ENCODE measurements at regions of chr1 and their contacts with region 1.

Region 1: DNA sequence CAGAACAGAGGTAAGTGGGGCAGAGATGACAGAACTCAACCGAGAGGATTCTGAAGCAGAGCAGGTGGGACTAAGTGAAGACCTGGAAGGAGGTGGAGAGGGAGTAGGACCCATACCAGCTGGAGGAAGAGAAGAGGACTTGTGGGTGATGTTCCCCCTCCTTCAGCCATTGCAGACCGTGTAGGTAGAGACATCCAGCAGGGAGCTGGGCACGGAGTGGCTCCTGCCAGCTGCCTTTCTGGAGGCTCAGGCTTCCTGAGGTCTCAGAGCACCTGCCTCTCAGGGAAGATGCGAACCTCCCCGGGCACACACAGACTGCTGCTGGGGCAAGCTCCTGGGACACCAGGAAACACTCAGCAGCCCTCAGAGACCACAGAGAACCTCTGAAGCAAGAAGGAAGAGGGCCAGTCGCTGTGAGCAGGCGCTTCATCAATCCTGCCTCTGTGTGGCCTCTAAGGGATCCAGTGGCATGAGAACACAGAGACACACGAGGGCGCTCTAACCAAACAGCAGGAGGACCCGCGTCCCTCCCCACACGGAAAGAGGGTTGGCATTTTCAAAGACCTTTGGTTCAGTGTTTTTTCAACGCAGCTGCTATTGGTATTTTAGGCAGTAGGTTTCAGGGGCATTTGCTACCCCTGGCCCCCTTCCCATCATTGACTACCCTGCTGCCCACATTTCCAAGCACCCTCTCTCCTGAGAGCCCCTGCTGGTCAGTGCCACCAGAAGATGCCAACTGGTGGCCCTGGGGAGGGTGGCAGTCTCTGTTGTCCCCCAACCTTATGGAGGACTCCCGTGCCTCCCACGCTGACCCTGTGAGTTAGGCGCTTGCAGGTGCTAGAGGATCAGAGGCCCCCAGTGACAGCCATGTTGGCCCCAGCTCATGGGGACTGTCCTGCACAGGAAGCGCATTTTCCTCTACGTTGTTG is 89.6 kb upstream of the EDN2 start:
- DNase-seq: peak; percentile 69 to 84
- ATAC-seq: peak; percentile 87 to 94 (median 92)
- H3K4me3 ChIP-seq: no peak overlapping the region
- H3K27ac ChIP-seq: no peak overlapping the region
- H3K4me1 ChIP-seq: peaks cover 0 to 8% (median 0%) of the 10 kb centered on the region in 9 donors
- H3K27me3 ChIP-seq: no peaks in the 10 kb centered on the region
- CTCF ChIP-seq: peak; percentile 76 to 92 (median 91)

Region 2: GRCh38 chr1:40610156-40610555 is 963.9 kb before region 1 on chr1:
- intact Hi-C with region 1: no loop called
- DNase-seq: no peak
- ATAC-seq: peak in 2 of 8 donors; percentile 34 to 38
- H3K4me3 ChIP-seq: no peak overlapping the region
- H3K27ac ChIP-seq: no peak overlapping the region
- H3K4me1 ChIP-seq: peaks cover 0 to 6% (median 0%) of the 10 kb centered on the region in 9 donors
- H3K27me3 ChIP-seq: peaks cover 0 to 5% (median 0%) of the 10 kb centered on the region in 7 donors
- CTCF ChIP-seq: no peak

Region 3: DNA sequence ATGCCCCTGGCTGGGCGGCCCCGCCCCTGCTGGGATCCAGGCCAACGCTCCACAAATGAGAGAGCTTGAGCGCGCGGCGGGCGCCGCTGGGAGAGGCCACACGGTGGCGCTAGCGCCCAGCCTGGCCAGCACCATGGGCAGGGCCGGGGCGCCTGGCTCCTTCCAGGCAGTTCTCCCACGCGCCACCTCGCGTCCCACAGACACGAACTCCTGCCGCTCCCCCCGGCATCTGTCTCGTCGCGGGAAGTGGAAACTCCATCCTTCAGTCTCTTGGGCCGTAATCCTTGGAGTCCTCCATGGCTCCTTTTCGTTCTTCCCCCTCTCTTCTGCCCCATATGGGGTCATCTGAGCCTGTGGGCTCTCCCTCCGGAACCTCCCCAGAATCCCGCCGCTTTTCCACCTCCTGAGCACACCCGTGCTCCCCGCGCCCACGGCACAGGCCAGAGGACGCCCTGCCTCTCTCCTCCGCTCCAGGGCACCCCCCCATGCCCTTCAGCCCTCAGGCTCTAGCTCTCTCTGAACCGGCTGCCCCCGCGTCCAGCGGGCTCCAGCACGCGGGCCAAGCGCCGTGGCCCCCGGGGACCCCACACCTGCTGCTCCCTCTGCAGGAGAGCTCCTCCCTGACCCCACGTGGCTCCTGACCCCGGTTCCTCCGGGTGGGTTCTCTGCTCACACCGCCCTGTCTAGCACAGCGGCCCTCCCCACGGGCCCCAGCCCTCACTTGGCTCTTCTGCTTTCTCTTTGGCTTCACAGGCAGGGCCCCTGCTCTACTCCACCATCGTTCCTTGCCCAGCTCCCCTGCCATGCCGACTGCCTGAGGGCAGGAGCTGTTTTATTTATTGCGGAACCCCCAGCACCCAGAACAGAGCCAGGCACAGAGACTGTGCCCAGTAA is 57.6 kb before region 1 on chr1:
- intact Hi-C with region 1: loop called in 1 of 10 experiments (anchors 5 kb)
- DNase-seq: peak; percentile 91 to 94
- ATAC-seq: peak; percentile 94 to 98 (median 96)
- H3K4me3 ChIP-seq: peak overlapping the region; percentile 26 to 58 (median 50)
- H3K27ac ChIP-seq: peak overlapping the region in 5 of 10 donors; percentile 15 to 48 (median 21)
- H3K4me1 ChIP-seq: peaks cover 16 to 38% (median 22%) of the 10 kb centered on the region in 9 donors
- H3K27me3 ChIP-seq: no peaks in the 10 kb centered on the region
- CTCF ChIP-seq: peak; percentile 90 to 97 (median 92)

Region 4: DNA sequence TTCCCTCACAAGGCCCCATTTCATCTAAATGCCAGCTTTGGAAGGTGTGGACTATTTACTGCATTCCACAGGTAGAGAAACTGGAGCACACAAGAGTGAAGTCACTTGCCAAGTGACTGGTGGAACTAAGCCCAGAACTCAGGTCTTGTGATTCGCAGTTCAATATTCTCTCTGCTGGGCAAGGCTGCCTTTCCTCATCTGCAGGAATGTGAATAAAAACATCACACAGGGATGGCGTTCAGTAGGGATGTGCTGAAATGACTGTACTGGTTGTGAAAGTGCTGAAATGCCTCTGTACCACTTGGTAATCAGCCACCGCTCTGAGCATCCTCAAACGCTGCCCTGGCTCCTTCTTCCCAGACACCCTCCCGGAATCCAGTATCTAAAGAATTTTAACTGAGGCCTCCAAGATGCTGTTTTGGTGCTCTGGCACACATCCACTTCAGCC is 199.1 kb after region 1 on chr1:
- intact Hi-C with region 1: loop called in 2 of 10 experiments (anchors 5 to 10 kb)
- DNase-seq: no peak
- ATAC-seq: peak in 2 of 8 donors; percentile 13 to 35
- H3K4me3 ChIP-seq: no peak overlapping the region
- H3K27ac ChIP-seq: no peak overlapping the region
- H3K4me1 ChIP-seq: peaks cover 0 to 35% (median 7%) of the 10 kb centered on the region in 9 donors
- H3K27me3 ChIP-seq: no peaks in the 10 kb centered on the region
- CTCF ChIP-seq: no peak

Region 5: DNA sequence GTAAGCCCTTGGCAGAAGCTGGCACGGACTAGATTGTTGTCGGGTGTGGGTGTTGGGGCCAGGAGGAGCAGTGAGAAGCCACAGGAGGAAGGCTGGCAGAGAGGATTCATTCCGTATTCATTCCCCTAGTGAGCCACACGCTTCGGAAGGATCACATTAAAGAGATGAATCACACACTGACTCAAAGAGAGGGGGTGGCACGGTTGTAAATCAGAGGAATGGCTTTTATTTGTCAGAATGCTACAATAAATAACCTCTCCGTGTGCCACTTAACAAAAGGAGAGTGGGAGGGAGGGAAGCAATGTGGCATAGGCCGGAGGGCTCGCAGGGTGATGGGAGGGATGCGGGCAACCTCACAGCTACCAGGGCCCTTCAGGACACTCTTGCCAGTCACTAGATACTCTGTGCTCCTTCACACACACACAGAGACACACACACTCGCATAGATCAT is 209.2 kb after region 1 on chr1:
- intact Hi-C with region 1: loop called in 4 of 10 experiments (anchors 5 to 10 kb)
- DNase-seq: no peak
- ATAC-seq: no peak
- H3K4me3 ChIP-seq: no peak overlapping the region
- H3K27ac ChIP-seq: no peak overlapping the region
- H3K4me1 ChIP-seq: peaks cover 0 to 24% (median 0%) of the 10 kb centered on the region in 9 donors
- H3K27me3 ChIP-seq: no peaks in the 10 kb centered on the region
- CTCF ChIP-seq: no peak

Region 6: DNA sequence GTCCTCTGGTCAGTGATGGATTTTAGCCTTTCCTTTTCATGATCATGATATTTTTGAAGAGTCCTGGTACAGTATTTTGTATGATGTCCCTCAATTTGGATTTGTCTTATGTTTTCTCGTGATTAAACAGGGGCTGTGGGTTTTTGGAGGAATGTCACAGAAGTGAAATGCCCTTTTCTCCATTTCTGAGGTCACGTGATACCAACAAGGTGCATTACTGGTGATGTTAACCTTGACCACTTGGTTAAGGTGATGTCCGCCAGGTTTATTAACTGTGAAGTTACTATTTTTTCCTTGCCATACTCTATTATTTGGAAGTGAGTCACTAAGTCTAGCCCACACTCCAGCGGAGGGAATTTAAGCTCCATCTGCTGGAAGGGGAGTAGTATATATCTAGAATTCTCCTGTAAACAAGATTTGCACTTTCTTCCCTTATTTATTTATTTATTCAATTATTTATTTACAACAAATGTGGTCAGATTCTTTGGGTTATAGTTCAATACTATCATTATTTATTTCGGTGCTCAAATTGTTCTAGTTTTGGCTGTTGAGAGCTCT is 221.2 kb after region 1 on chr1:
- intact Hi-C with region 1: loop called in 9 of 10 experiments (anchors 1 to 10 kb)
- DNase-seq: no peak
- ATAC-seq: no peak
- H3K4me3 ChIP-seq: no peak overlapping the region
- H3K27ac ChIP-seq: no peak overlapping the region
- H3K4me1 ChIP-seq: peaks cover 0 to 28% (median 2%) of the 10 kb centered on the region in 9 donors
- H3K27me3 ChIP-seq: no peaks in the 10 kb centered on the region
- CTCF ChIP-seq: peak in 8 of 9 donors; percentile 5 to 54 (median 39)

Region 7: GRCh38 chr1:41802532-41803501 is 228.8 kb after region 1 on chr1:
- intact Hi-C with region 1: loop called in 5 of 10 experiments (anchors 5 to 10 kb)
- DNase-seq: peak; percentile 53 to 73
- ATAC-seq: peak; percentile 54 to 80 (median 58)
- H3K4me3 ChIP-seq: no peak overlapping the region
- H3K27ac ChIP-seq: peak overlapping the region in 3 of 10 donors; percentile 34 to 82 (median 56)
- H3K4me1 ChIP-seq: peaks cover 3 to 64% (median 11%) of the 10 kb centered on the region in 9 donors
- H3K27me3 ChIP-seq: no peaks in the 10 kb centered on the region
- CTCF ChIP-seq: no peak

Region 8: DNA sequence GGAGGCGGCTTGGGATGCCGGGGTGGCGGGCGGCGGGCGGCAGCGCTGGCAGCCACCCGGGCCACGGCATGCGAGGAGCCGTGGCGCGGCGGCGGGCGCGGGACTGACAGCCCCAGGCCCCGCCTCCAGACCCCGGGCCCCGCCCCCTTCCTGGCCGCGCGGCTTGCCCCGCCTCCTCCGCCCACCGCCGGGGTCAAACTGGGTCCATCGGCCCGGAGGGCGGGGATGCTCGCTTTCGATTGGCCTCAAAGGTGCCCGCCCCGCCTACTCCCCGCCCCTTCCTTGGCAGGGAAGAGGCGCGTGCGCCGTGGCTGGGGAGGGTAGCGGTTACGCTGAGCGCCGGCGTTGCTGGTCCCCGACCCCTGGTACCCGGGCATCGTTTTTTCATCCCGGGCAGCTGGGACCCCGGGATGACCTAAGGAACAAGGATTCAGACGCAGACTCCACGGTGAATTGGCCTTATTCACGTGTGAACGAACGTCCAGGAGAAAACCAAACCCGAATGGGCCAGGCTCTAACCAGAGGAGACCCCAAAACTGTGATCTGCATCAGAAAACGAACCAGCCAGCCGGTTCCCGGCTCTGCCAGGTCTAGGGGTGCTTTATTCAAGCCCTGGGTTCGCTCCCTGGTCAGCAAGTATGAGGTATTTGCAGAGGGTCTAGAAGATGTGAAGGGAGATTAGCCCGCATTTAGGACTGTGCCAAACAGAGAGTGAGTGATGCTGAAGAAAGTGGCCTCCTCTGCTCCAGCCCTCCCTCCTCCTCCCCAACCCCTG is 462.0 kb after region 1 on chr1:
- intact Hi-C with region 1: loop called in 3 of 10 experiments (anchors 10 kb)
- DNase-seq: peak; percentile 96 to 98
- ATAC-seq: peak; percentile 97 to 99 (median 98)
- H3K4me3 ChIP-seq: peak overlapping the region in 9 of 10 donors; percentile 81 to 99 (median 95)
- H3K27ac ChIP-seq: peak overlapping the region; percentile 29 to 91 (median 81)
- H3K4me1 ChIP-seq: peaks cover 0 to 18% (median 12%) of the 10 kb centered on the region in 9 donors
- H3K27me3 ChIP-seq: no peaks in the 10 kb centered on the region
- CTCF ChIP-seq: no peak